ENCODE measurements at regions of chr9 and their contacts with region 1.

Region 1: GRCh38 chr9:3124006-3124405 is 280.1 kb upstream of the PUM3 start:
- DNase-seq: no peak
- H3K27ac ChIP-seq: no peak overlapping the region
- CTCF ChIP-seq: no peak

Region 2: GRCh38 chr9:2889023-2889422 is 235.0 kb before region 1 on chr9:
- CTCF ChIA-PET with region 1: interaction called, 10 read pairs
- POLR2A ChIA-PET with region 1: no interaction called
- DNase-seq: no peak
- H3K27ac ChIP-seq: no peak overlapping the region
- CTCF ChIP-seq: no peak

Region 3: DNA sequence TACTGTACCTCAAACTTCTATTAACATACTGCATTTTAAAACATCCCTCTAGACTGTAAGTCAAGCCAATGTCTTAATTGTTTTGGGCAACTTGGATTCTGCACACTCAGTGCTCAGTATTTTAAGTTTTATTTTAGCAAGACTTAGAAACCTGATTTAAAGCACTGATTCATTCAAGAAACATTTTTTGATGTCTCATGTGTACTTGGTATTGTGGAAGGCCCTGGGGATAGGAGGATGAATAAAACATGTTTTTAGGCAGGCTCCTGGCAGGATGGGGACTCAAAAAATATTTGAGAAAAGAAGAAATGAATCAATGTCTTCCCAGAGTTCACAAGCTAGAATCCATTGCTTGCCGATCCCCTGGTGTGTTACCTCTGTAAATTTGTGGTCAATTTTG is 53.9 kb after region 1 on chr9:
- CTCF ChIA-PET with region 1: no interaction called
- POLR2A ChIA-PET with region 1: no interaction called
- DNase-seq: no peak
- H3K27ac ChIP-seq: no peak overlapping the region
- CTCF ChIP-seq: no peak